ENCODE measurements at regions of chr14 and their contacts with region 1.

Region 1: GRCh38 chr14:49879683-49880204 is 13.1 kb upstream of the ARF6 start:
- DNase-seq: no peak
- H3K4me3 ChIP-seq: no peak overlapping the region
- H3K27ac ChIP-seq: no peak overlapping the region
- H3K4me1 ChIP-seq: peaks cover 0 to 3% of the 10 kb centered on the region in 2 donors
- H3K27me3 ChIP-seq: no peaks in the 10 kb centered on the region
- CTCF ChIP-seq: peak; percentile 46 to 58 (median 54)

Region 2: GRCh38 chr14:49946320-49947141 is 66.8 kb after region 1 on chr14:
- intact Hi-C with region 1: loop called (anchors 5 kb)
- DNase-seq: no peak
- H3K4me3 ChIP-seq: peak overlapping the region in 1 of 2 donors; percentile 19
- H3K27ac ChIP-seq: peak overlapping the region; percentile 43 to 45
- H3K4me1 ChIP-seq: peaks cover 6 to 10% of the 10 kb centered on the region in 2 donors
- H3K27me3 ChIP-seq: no peaks in the 10 kb centered on the region
- CTCF ChIP-seq: no peak

Region 3: GRCh38 chr14:50055461-50056228 is 175.9 kb after region 1 on chr14:
- intact Hi-C with region 1: no loop called
- DNase-seq: peak in 1 of 2 donors; percentile 65
- H3K4me3 ChIP-seq: no peak overlapping the region
- H3K27ac ChIP-seq: no peak overlapping the region
- H3K4me1 ChIP-seq: peaks cover 7 to 10% of the 10 kb centered on the region in 2 donors
- H3K27me3 ChIP-seq: no peaks in the 10 kb centered on the region
- CTCF ChIP-seq: no peak

Region 4: GRCh38 chr14:50619556-50620141 is 739.9 kb after region 1 on chr14:
- intact Hi-C with region 1: no loop called
- DNase-seq: no peak
- H3K4me3 ChIP-seq: no peak overlapping the region
- H3K27ac ChIP-seq: no peak overlapping the region
- H3K4me1 ChIP-seq: no peaks in the 10 kb centered on the region
- H3K27me3 ChIP-seq: no peaks in the 10 kb centered on the region
- CTCF ChIP-seq: peak; percentile 40 to 58 (median 46)